Natural killer cell (primary cell): ENCODE measurements at regions of chr3 and their contacts with region 1.

Region 1: DNA sequence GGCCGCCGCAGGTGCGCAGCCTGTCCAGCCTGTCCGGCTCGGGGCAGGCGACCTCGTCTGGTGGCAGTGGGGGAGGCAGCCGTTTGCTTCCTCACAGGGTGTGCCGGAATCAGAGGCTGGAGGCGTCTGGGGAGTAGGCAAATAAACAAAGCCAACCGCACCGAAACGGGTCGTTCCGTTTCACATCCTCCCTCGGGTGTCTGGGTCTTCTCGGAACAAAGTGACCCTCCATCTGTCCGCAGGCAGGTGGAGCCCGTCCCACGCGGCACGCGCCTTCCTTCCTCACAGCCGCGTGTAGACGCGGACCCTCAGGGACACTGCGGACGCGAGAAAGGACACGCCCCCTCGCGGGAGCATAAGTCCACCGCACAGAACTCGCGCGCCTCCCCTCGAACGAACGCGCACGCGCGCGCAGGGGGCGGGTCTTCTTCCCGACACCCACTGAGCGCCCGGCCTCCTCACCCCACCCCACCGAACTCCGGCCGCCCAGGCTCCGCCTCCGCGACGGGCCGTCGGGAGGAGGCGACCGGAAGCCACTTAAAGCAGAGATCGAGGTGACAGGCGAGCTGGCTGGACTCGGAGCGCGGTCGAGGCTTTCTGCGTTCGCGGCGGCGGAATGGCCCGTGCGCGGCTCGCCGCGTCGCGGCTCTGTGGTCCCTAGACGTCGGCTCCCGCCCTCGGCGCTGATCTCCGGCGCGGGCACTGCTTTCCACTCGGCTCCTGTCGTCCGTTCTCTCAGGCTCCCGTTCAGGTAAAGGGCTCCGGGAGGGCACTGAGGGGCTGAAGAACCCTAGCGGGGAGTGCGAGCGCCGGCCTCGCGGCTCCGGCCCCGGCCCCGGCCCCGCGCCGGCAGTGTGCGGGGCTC is at the start of gene TIPARP:
- DNase-seq: peak; percentile 99 to 100
- ATAC-seq: peak; percentile 78 to 95 (median 82)
- H3K4me3 ChIP-seq: peak within 1 kb of the TSS; percentile 79
- H3K4me3 Mint-ChIP-seq: peak within 1 kb of the TSS; percentile 93
- H3K27ac ChIP-seq: peak within 1 kb of the TSS; percentile 85
- H3K27ac Mint-ChIP-seq: peak within 1 kb of the TSS; percentile 93 to 99
- H3K4me1 ChIP-seq: peaks cover 17% of the 10 kb centered on the region
- H3K4me1 Mint-ChIP-seq: peaks cover 48 to 49% of the 10 kb centered on the region in 2 donors
- H3K27me3 ChIP-seq: no peaks in the 10 kb centered on the region
- H3K27me3 Mint-ChIP-seq: no peaks in the 10 kb centered on the region
- CTCF ChIP-seq: peak; percentile 64
- total RNA-seq, gene TIPARP: 129 to 249 (median 147) TPM

Region 2: DNA sequence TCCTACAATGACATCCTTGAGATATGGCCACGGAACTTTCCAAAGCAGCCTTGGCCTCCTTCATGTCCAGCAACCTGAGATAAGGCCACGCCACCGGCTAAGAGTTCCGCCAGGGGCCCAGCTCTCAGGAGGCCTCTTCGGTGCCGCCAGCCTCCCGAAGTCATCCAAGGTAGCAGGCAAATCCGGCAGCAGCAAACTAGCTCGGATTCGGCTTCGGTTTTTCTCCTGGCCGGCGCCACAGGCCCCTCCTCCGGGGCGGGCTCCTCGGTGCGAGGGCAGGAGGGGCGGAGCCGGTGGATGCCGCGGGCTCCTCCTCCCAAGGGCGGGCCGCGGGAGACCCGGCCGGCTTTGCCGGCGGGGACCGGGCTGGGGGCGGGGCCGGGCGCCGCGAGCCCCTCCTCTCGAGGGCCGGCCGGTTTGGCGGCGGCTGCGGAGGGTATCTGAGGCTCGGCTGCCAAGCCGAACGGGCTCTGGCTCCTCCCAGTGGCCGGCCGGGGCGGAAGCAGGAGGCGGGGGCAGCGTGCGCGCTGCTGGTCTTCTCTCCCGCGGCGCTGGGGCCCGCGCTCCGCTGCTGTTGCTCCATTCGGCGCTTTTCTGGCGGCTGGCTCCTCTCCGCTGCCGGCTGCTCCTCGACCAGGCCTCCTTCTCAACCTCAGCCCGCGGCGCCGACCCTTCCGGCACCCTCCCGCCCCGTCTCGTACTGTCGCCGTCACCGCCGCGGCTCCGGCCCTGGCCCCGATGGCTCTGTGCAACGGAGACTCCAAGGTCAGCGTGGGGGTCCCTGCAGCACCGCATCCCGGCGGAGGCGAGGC is 803.9 kb before region 1 on chr3 and contains the start of gene GMPS:
- intact Hi-C with region 1: loop called (anchors 10 kb)
- DNase-seq: peak; percentile 96 to 97
- ATAC-seq: peak; percentile 90 to 98 (median 92)
- H3K4me3 ChIP-seq: peak within 1 kb of the TSS; percentile 92
- H3K4me3 Mint-ChIP-seq: peak within 1 kb of the TSS; percentile 95
- H3K27ac ChIP-seq: peak within 1 kb of the TSS; percentile 95
- H3K27ac Mint-ChIP-seq: peak within 1 kb of the TSS; percentile 90 to 96
- H3K4me1 ChIP-seq: peaks cover 9% of the 10 kb centered on the region
- H3K4me1 Mint-ChIP-seq: peaks cover 18 to 20% of the 10 kb centered on the region in 2 donors
- H3K27me3 ChIP-seq: no peaks in the 10 kb centered on the region
- H3K27me3 Mint-ChIP-seq: no peaks in the 10 kb centered on the region
- CTCF ChIP-seq: peak; percentile 43
- total RNA-seq, gene GMPS: 36.7 to 49.7 (median 45.4) TPM

Region 3: GRCh38 chr3:156373095-156373494 is 301.2 kb before region 1 on chr3:
- intact Hi-C with region 1: no loop called
- DNase-seq: no peak
- ATAC-seq: no peak
- H3K4me3 ChIP-seq: no peak overlapping the region
- H3K4me3 Mint-ChIP-seq: no peak overlapping the region
- H3K27ac ChIP-seq: no peak overlapping the region
- H3K27ac Mint-ChIP-seq: no peak overlapping the region
- H3K4me1 ChIP-seq: no peaks in the 10 kb centered on the region
- H3K4me1 Mint-ChIP-seq: no peaks in the 10 kb centered on the region
- H3K27me3 ChIP-seq: no peaks in the 10 kb centered on the region
- H3K27me3 Mint-ChIP-seq: peaks cover 8 to 37% of the 10 kb centered on the region in 2 donors
- CTCF ChIP-seq: no peak

Region 4: DNA sequence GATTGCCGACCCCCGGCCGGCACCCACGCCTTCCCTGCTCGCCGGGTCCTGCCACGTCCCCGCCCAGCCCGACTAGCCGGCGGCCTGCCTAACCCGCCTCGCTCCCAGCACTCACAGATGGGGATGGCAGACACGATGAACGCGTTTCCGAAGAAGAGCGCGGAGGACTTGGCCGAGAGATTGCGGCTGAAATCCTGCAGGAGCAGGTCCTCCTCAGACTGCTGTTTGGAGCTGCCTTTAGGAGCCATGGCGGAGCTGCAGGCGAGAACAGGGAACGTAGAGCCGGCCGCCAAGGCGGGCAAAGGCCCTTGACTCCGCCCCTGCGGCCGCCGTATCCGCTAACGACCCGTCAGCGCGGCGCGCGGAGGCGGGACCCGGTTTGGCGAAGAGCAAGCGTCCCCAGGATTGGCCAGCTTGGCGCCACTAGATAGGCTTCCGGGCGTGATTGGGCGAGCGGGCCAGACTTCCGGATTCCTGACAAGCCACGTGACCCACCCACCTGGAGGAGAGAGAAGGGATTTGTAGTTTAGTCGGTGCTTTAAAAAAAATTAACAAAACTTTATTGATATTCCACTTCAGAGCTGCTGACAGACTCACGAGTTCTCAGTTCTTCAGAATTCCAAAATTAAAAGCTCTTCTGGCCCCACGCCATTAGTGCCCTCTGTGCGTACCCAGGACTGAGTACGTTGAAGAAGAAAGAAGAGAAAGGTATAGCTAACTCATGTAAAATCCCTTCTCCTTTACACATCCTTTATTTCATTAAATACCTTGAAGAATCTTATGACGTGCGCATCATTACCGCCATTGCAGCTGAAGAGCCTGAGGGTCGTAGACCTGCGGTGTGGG is 119.2 kb before region 1 on chr3 and contains the start of gene SSR3:
- intact Hi-C with region 1: loop called (anchors 1 kb)
- DNase-seq: peak; percentile 98 to 99
- ATAC-seq: peak; percentile 98 to 100 (median 98)
- H3K4me3 ChIP-seq: peak within 1 kb of the TSS; percentile 78
- H3K4me3 Mint-ChIP-seq: peak within 1 kb of the TSS; percentile 93
- H3K27ac ChIP-seq: peak within 1 kb of the TSS; percentile 63
- H3K27ac Mint-ChIP-seq: peak within 1 kb of the TSS; percentile 90 to 93
- H3K4me1 ChIP-seq: peaks cover 8% of the 10 kb centered on the region
- H3K4me1 Mint-ChIP-seq: peaks cover 42 to 48% of the 10 kb centered on the region in 2 donors
- H3K27me3 ChIP-seq: no peaks in the 10 kb centered on the region
- H3K27me3 Mint-ChIP-seq: no peaks in the 10 kb centered on the region
- CTCF ChIP-seq: no peak
- total RNA-seq, gene SSR3: 60.7 to 75.1 (median 63.0) TPM

Region 5: DNA sequence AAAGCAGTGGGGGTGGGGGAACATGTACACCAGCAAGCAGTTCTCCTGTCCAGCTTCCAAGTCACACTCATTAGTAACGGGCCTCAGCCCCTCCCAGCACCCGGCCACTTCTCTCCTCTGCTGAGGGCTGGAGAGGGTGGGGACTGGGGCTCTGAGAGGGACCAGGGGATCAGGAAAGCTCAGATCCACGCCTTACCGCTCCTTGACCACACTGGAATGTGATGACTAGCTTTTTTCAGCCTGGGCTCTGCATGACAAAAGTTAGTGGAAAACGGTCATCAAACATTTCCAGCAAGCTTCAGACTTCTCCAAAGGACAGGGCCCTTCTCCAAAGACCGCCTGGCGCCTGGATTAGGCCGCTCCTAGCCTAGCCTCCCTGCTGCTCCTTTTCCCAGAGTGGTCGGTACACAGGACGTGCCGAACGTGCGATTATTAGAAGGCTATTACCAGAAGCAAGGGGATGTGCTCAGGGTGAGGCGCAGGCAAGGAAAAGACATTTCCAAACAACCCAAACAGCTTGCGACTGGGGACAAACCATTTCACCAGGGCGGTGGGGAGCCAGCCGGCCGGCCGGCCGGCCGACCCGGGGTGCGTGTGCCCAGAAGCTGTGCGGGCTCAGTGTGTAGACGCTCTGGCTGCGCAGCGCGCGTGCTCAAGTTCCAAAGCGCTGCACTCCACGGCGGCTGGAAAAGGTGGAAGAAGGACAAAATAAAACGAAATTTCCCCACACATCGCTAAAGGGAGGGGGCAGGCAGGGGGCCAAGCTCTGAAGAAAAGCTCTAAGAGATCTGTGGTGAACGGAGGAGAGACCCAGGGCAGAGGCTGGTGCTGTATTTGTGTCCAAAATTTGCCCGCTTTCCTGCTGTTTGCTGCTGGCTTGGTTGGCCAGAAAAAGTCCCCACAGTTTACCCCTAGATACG is 68.3 kb before region 1 on chr3:
- intact Hi-C with region 1: no loop called
- DNase-seq: peak in 1 of 2 donors; percentile 9
- ATAC-seq: peak in 2 of 3 donors; percentile 65 to 68
- H3K4me3 ChIP-seq: peak overlapping the region; percentile 24
- H3K4me3 Mint-ChIP-seq: peak overlapping the region; percentile 84
- H3K27ac ChIP-seq: no peak overlapping the region
- H3K27ac Mint-ChIP-seq: peak overlapping the region in 1 of 2 donors; percentile 76
- H3K4me1 ChIP-seq: peaks cover 9% of the 10 kb centered on the region
- H3K4me1 Mint-ChIP-seq: peaks cover 0 to 17% of the 10 kb centered on the region in 2 donors
- H3K27me3 ChIP-seq: peaks cover 5% of the 10 kb centered on the region
- H3K27me3 Mint-ChIP-seq: peaks cover 12 to 23% of the 10 kb centered on the region in 2 donors
- CTCF ChIP-seq: no peak

Region 6: DNA sequence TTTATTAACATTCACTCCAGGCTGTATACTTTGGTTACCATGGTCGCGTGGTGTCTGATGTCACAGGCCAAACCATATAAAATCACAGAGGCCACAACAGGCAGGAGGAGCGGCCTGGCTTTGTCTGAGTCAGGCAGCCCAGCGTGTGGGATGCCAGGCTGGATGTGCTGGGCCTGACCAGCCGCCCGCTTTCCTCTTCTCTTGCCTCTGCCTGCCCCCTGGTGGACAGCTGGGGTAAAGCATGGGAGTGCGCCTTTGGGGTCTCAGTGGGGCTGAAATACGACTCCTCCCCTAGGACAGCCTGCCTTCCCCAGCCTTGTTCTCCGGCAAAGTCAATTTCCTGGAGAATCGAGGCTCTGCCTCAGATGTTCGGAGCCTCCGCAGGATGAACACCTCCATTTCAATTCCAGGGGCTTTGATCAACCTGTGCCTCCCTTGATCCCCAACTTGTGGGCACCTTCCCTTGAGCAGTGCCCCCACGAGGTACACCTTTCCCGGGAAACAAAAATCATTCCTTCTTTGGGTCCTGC is 407.5 kb after region 1 on chr3:
- intact Hi-C with region 1: loop called (anchors 1 kb)
- DNase-seq: peak; percentile 80 to 90
- ATAC-seq: peak; percentile 90 to 99 (median 98)
- H3K4me3 ChIP-seq: no peak overlapping the region
- H3K4me3 Mint-ChIP-seq: no peak overlapping the region
- H3K27ac ChIP-seq: peak overlapping the region; percentile 48
- H3K27ac Mint-ChIP-seq: peak overlapping the region in 1 of 2 donors; percentile 65
- H3K4me1 ChIP-seq: peaks cover 10% of the 10 kb centered on the region
- H3K4me1 Mint-ChIP-seq: peaks cover 0 to 7% of the 10 kb centered on the region in 2 donors
- H3K27me3 ChIP-seq: no peaks in the 10 kb centered on the region
- H3K27me3 Mint-ChIP-seq: peaks cover 11 to 17% of the 10 kb centered on the region in 2 donors
- CTCF ChIP-seq: peak; percentile 98

Region 7: DNA sequence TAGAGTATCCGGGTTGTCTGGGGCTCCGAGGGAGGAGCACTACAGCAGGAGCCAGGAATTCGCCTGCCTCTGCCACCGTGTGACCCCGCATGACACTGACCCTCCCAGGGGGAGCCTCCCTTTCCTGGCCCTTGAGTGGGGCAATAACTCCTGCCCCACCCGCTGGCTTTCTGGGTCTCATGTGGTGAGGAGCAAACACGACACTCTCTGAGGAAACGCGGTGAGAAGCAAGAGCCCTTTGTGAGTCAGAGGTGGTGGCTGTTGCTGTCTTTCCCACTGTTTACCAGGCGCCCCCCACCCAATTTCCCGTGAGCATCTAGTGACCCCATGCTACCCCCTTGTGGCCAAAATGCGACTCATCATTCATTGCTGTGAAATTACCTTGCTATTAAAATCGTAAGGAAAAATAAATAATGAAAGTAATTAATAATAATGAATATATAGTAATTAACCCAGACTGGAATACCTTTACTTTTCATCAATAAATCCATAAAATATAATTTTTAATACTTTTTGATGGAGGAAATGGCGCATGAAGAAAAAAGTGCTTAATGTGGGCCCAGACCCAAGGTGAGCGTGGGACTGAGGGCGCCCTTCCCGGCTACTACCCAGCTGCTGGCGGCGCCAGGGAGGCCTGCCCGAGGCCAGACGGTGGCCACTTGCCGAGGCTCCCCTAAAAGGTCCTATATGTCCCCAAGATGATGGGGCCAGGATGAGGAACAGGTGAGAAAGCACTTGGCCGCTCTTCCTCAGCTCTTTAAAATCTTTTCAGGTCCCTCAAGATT is 456.4 kb after region 1 on chr3:
- intact Hi-C with region 1: loop called (anchors 5 kb)
- DNase-seq: peak; percentile 46 to 92
- ATAC-seq: peak; percentile 70 to 73 (median 71)
- H3K4me3 ChIP-seq: no peak overlapping the region
- H3K4me3 Mint-ChIP-seq: peak overlapping the region; percentile 67
- H3K27ac ChIP-seq: peak overlapping the region; percentile 78
- H3K27ac Mint-ChIP-seq: peak overlapping the region; percentile 88
- H3K4me1 ChIP-seq: peaks cover 70% of the 10 kb centered on the region
- H3K4me1 Mint-ChIP-seq: peaks cover 43 to 50% of the 10 kb centered on the region in 2 donors
- H3K27me3 ChIP-seq: no peaks in the 10 kb centered on the region
- H3K27me3 Mint-ChIP-seq: no peaks in the 10 kb centered on the region
- CTCF ChIP-seq: peak; percentile 71

Region 8: GRCh38 chr3:158644345-158644908 is 1970.1 kb after region 1 on chr3 and contains the start of gene GFM1:
- intact Hi-C with region 1: loop called (anchors 10 kb)
- DNase-seq: peak; percentile 80 to 97
- ATAC-seq: peak; percentile 94 to 97 (median 95)
- H3K4me3 ChIP-seq: peak within 1 kb of the TSS; percentile 99
- H3K4me3 Mint-ChIP-seq: peak within 1 kb of the TSS; percentile 99
- H3K27ac ChIP-seq: peak within 1 kb of the TSS; percentile 78
- H3K27ac Mint-ChIP-seq: peak within 1 kb of the TSS; percentile 86 to 94
- H3K4me1 ChIP-seq: peaks cover 3% of the 10 kb centered on the region
- H3K4me1 Mint-ChIP-seq: peaks cover 29 to 36% of the 10 kb centered on the region in 2 donors
- H3K27me3 ChIP-seq: no peaks in the 10 kb centered on the region
- H3K27me3 Mint-ChIP-seq: no peaks in the 10 kb centered on the region
- CTCF ChIP-seq: peak; percentile 84
- total RNA-seq, gene GFM1: 38.4 to 55.5 (median 50.4) TPM